Calu3 (cell line): ENCODE measurements at regions of chr6 and their contacts with region 1.

Region 1: GRCh38 chr6:70221025-70221714 is 81.7 kb downstream of the COL9A1 start:
- DNase-seq: peak; percentile 28
- H3K4me3 Mint-ChIP-seq: no peak overlapping the region
- H3K27ac Mint-ChIP-seq: no peak overlapping the region
- H3K4me1 Mint-ChIP-seq: peaks cover 26% of the 10 kb centered on the region
- H3K27me3 Mint-ChIP-seq: peaks cover 13% of the 10 kb centered on the region
- CTCF ChIP-seq: peak; percentile 77

Region 2: DNA sequence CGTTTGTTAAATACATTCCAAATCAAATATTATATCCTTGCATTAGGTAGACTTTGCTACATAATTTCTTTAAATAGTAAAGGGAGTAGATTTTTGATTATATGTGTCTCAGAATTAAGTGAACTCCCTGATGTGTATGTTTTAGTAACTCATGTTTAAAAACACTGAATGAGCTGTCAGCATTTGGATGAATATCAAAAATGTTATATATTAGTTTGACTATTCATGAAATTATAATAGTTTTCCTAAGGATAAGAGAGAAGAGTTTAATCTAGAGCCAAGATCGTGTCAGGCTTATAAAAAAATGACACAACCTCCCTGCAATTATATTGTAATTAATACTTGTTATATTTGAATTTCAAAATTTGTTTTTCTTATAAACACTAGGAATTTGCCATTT is 159.6 kb before region 1 on chr6:
- CTCF ChIA-PET with region 1: no interaction called
- intact Hi-C with region 1: no loop called
- DNase-seq: no peak
- H3K4me3 Mint-ChIP-seq: no peak overlapping the region
- H3K27ac Mint-ChIP-seq: no peak overlapping the region
- H3K4me1 Mint-ChIP-seq: no peaks in the 10 kb centered on the region
- H3K27me3 Mint-ChIP-seq: no peaks in the 10 kb centered on the region
- CTCF ChIP-seq: no peak

Region 3: DNA sequence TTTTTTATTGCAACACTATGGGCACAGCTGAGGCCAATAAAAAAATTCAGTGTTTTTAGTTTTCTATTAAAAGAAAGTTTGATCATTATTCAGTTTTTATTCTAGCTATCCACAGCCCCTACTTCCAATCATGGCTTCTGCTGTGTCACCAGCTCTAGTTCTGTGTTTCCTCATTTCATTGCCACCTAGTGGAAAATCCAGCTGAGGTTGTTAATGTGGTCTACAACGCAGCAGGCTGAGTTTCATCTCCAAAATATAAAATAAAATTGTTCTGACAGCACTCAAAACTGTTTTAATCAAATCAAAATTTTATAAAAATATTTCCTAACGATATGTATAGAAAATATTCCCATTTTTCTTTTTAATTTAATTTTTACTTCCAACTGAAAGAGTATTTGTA is 68.1 kb after region 1 on chr6:
- CTCF ChIA-PET with region 1: interaction called, 37 read pairs
- intact Hi-C with region 1: loop called (anchors 1 kb)
- DNase-seq: peak; percentile 15
- H3K4me3 Mint-ChIP-seq: no peak overlapping the region
- H3K27ac Mint-ChIP-seq: no peak overlapping the region
- H3K4me1 Mint-ChIP-seq: no peaks in the 10 kb centered on the region
- H3K27me3 Mint-ChIP-seq: peaks cover 26% of the 10 kb centered on the region
- CTCF ChIP-seq: peak; percentile 14

Region 4: DNA sequence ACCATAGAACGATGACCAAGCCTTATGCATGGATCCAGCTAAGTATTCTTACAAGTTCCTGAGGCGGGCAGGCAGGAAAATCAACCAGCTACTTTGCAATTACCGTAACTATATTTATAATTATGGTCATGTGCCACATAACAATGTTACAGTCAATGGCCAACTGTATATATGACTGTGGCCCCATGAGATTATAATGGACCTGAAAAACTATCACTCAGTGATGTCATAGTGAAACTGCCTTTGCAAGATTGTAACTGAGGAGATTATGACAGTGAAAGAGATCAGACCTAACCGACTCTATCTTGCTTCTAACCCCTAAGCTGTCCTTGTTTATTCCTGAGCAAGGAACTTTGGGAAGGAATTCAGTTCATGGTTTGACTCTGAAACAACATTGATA is 159.1 kb after region 1 on chr6:
- CTCF ChIA-PET with region 1: no interaction called
- intact Hi-C with region 1: no loop called
- DNase-seq: no peak
- H3K4me3 Mint-ChIP-seq: peak overlapping the region; percentile 54
- H3K27ac Mint-ChIP-seq: peak overlapping the region; percentile 43
- H3K4me1 Mint-ChIP-seq: peaks cover 39% of the 10 kb centered on the region
- H3K27me3 Mint-ChIP-seq: no peaks in the 10 kb centered on the region
- CTCF ChIP-seq: no peak

Region 5: DNA sequence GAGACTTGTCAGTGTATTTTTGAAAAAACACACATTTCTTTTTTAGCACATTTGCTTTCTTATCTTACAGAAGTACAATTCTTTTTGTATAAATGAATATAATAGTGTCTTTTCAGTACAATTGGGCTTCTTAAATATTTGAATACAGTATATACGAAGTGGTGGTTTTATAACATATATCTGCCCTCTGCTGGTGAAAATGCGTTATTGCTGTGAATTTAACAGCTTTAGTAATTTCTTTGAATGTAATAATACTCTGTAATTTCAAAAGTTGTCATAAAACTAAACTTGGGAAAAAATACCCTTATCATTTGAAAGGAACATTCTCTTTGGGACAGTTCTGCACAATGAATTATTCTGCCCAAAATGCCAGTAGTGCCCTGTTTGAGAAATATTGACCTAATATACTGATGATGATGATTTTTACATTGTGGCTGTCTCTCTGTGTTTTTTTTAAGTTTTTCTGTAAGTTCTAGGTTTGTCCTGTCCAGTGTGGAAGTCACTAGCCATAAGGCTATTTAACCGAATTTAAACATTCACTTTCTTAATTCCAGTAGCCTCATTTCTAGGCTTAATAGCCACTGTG is 465.5 kb after region 1 on chr6:
- CTCF ChIA-PET with region 1: interaction called, 10 read pairs
- intact Hi-C with region 1: loop called (anchors 2 kb)
- DNase-seq: no peak
- H3K4me3 Mint-ChIP-seq: no peak overlapping the region
- H3K27ac Mint-ChIP-seq: no peak overlapping the region
- H3K4me1 Mint-ChIP-seq: peaks cover 23% of the 10 kb centered on the region
- H3K27me3 Mint-ChIP-seq: no peaks in the 10 kb centered on the region
- CTCF ChIP-seq: peak; percentile 65

Region 6: DNA sequence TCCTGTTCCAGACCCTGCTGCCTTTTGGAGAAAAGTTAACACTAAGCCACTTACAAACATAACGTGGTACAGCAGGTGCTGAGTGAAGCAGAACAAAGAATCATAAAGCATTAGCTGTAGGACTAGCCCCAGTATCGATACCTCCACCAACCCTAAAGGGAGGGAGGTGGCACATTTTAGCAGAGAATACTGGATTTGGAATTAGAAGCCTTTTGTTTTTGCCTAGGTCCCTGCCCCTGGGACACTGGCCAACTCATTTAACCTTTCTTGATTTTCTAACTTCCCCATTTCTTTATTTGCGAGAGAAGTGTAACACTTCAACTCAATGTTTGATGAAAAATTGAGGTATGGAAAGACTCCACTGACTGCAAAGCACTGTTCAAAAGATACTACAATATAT is 642.2 kb after region 1 on chr6:
- CTCF ChIA-PET with region 1: no interaction called
- intact Hi-C with region 1: no loop called
- DNase-seq: no peak
- H3K4me3 Mint-ChIP-seq: no peak overlapping the region
- H3K27ac Mint-ChIP-seq: no peak overlapping the region
- H3K4me1 Mint-ChIP-seq: no peaks in the 10 kb centered on the region
- H3K27me3 Mint-ChIP-seq: no peaks in the 10 kb centered on the region
- CTCF ChIP-seq: no peak

Region 7: DNA sequence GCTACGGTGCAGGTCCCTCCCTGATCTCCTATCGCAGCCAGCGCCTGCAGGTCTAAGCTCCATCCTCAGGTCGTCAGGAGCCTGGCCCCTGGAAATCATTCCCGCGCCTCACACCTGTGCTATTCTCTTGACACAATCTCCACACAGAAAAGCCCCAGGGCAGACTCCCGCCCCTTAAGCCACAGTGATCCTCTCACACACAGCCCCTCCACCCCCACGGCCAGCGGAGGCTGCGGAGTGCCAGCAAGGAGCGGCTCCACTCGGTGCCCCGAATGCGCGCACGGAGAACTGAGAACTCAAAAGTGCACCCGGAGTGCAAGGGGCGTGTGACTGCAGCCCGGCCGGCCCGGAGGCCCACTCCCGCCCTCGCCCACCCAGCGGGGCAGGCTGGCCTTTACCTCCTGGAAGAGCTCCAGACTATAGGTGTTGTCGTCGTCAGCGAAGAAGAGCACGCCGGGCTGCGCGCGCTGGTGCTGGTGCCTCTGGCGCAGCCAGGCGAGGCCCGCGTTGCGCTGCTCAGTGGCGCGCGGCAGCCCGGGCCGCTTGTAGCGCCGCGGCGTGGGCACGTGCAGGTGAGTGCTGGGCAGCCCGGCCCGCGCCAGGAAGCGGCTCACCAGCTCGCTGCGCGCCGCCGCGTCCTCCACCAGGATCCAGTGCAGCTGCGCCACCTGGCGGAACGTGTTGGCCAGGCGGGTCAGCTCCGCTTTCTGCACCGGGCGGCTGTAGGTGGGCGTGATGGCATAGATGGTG is 734.4 kb after region 1 on chr6:
- CTCF ChIA-PET with region 1: interaction called, 39 read pairs
- intact Hi-C with region 1: loop called (anchors 2 kb)
- DNase-seq: peak; percentile 96
- H3K4me3 Mint-ChIP-seq: peak overlapping the region; percentile 99
- H3K27ac Mint-ChIP-seq: no peak overlapping the region
- H3K4me1 Mint-ChIP-seq: peaks cover 8% of the 10 kb centered on the region
- H3K27me3 Mint-ChIP-seq: peaks cover 97% of the 10 kb centered on the region
- CTCF ChIP-seq: peak; percentile 95